ENCODE measurements at regions of chr1 and their contacts with region 1.

Region 1: GRCh38 chr1:170831276-170831675 is 104.1 kb upstream of the MROH9 start:
- DNase-seq: no peak
- ATAC-seq: no peak
- H3K4me3 ChIP-seq: no peak overlapping the region
- H3K27ac ChIP-seq: no peak overlapping the region
- H3K4me1 ChIP-seq: no peaks in the 10 kb centered on the region
- H3K27me3 ChIP-seq: no peaks in the 10 kb centered on the region
- CTCF ChIP-seq: no peak
- POLR2A ChIP-seq: no peak
- RAD21 ChIP-seq: no peak

Region 2: DNA sequence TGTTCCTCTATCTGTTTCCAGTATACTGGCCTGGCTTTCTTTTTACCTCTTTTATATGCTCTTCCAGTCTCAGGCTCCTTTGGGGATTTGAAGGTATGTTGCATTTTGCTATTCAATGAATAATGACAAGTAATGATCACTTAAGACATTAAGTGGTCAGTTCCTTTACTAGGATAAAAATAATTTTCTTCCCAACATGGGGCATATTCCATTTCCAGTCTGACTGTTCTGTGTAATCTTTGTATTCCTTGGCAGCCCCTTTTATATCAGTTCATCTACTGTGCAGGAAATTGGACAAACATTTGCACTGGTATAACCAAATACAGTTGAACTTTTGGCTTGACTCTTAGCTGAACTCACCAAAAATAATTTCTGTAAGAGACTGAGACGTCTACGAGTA is 1052.1 kb before region 1 on chr1:
- CTCF ChIA-PET with region 1: no interaction called
- POLR2A ChIA-PET with region 1: no interaction called
- dilution Hi-C with region 1: no loop called
- in situ Hi-C with region 1: no loop called
- intact Hi-C with region 1: loop called (anchors 5 kb)
- DNase-seq: no peak
- ATAC-seq: no peak
- H3K4me3 ChIP-seq: no peak overlapping the region
- H3K27ac ChIP-seq: no peak overlapping the region
- H3K4me1 ChIP-seq: no peaks in the 10 kb centered on the region
- H3K27me3 ChIP-seq: peaks cover 2% of the 10 kb centered on the region
- CTCF ChIP-seq: no peak
- POLR2A ChIP-seq: no peak
- RAD21 ChIP-seq: no peak

Measured in IMR-90 (cell line).